MCF 10A (cell line): ENCODE measurements at regions of chr17 and their contacts with region 1.

Region 1: GRCh38 chr17:82236142-82236981 is 7.5 kb downstream of the SLC16A3 start:
- DNase-seq: peak; percentile 74
- H3K4me3 Mint-ChIP-seq: peak overlapping the region; percentile 16
- H3K27ac Mint-ChIP-seq: peak overlapping the region; percentile 39
- H3K4me1 Mint-ChIP-seq: peaks cover 22% of the 10 kb centered on the region
- H3K27me3 Mint-ChIP-seq: no peaks in the 10 kb centered on the region
- CTCF ChIP-seq: peak; percentile 94

Region 2: GRCh38 chr17:82037113-82037888 is 199.1 kb before region 1 on chr17 and contains the start of gene DCXR:
- CTCF ChIA-PET with region 1: interaction called, 3 read pairs
- POLR2A ChIA-PET with region 1: no interaction called
- intact Hi-C with region 1: loop called (anchors 10 kb)
- DNase-seq: peak; percentile 96
- H3K4me3 Mint-ChIP-seq: peak within 1 kb of the TSS; percentile 82
- H3K27ac Mint-ChIP-seq: peak within 1 kb of the TSS; percentile 88
- H3K4me1 Mint-ChIP-seq: peaks cover 8% of the 10 kb centered on the region
- H3K27me3 Mint-ChIP-seq: no peaks in the 10 kb centered on the region
- CTCF ChIP-seq: peak; percentile 71
- total RNA-seq, gene DCXR: 77.9 and 111 TPM in 2 replicates

Region 3: GRCh38 chr17:82212331-82213250 is 23.8 kb before region 1 on chr17 and contains the start of gene CCDC57:
- CTCF ChIA-PET with region 1: interaction called, 15 read pairs
- POLR2A ChIA-PET with region 1: interaction called, 40 read pairs
- intact Hi-C with region 1: loop called (anchors 5 kb)
- DNase-seq: peak; percentile 67
- H3K4me3 Mint-ChIP-seq: peak within 1 kb of the TSS; percentile 72
- H3K27ac Mint-ChIP-seq: peak within 1 kb of the TSS; percentile 57
- H3K4me1 Mint-ChIP-seq: peaks cover 26% of the 10 kb centered on the region
- H3K27me3 Mint-ChIP-seq: no peaks in the 10 kb centered on the region
- CTCF ChIP-seq: no peak
- total RNA-seq, gene CCDC57: 86.8 and 87.3 TPM in 2 replicates

Region 4: DNA sequence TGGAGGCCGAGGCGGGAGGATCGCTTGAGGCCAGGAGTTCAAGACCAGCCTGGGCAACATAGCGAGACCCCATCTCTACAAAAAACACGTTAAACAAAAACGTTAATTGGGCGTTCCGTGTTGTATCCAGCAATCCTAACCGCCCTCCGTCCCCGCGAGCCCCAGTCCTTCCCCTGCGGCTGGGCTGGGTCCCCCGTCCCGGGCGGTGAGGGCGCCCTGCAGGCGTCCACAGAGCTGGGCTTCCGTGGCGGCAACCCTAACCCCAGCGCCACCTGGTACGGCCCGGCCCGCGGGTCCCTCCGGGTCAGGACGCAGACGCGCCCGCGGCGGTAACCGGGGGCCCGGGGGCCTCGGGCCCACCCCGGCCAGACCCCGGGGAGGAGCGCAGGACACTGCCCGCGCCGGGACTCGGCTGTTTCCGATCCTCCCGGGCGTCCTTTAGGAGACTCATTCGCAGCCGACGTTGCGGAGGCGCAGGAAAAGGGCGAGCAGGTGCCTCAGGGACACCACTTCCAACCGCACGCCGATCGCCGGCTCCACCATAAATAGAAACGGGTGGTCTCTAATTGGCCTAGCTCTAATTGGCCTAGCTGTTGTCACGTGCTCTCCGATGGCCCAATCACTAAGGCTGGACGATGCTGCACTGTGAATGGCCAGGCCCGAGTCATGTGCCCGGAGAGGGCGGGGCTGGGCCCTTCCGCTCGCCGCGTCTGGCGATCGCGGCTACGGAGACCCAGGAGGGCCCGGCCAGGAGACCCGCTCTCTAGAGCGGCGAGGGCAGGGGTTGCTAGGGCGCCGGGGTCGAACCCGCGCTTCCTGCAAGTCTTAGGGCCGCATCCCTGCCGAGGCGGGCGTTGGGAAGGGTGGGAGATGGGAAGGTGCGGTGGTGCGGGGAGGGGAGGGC is 56.1 kb after region 1 on chr17:
- CTCF ChIA-PET with region 1: no interaction called
- POLR2A ChIA-PET with region 1: interaction called, 49 read pairs
- intact Hi-C with region 1: no loop called
- DNase-seq: peak; percentile 98
- H3K4me3 Mint-ChIP-seq: peak overlapping the region; percentile 74
- H3K27ac Mint-ChIP-seq: peak overlapping the region; percentile 51
- H3K4me1 Mint-ChIP-seq: peaks cover 35% of the 10 kb centered on the region
- H3K27me3 Mint-ChIP-seq: no peaks in the 10 kb centered on the region
- CTCF ChIP-seq: no peak

Region 5: GRCh38 chr17:82332669-82333278 is 96.4 kb after region 1 on chr17:
- CTCF ChIA-PET with region 1: no interaction called
- POLR2A ChIA-PET with region 1: interaction called, 26 read pairs
- intact Hi-C with region 1: no loop called
- DNase-seq: peak; percentile 68
- H3K4me3 Mint-ChIP-seq: peak overlapping the region; percentile 85
- H3K27ac Mint-ChIP-seq: peak overlapping the region; percentile 85
- H3K4me1 Mint-ChIP-seq: peaks cover 16% of the 10 kb centered on the region
- H3K27me3 Mint-ChIP-seq: no peaks in the 10 kb centered on the region
- CTCF ChIP-seq: no peak